ENCODE measurements at regions of chr11 and their contacts with region 1.

Region 1: DNA sequence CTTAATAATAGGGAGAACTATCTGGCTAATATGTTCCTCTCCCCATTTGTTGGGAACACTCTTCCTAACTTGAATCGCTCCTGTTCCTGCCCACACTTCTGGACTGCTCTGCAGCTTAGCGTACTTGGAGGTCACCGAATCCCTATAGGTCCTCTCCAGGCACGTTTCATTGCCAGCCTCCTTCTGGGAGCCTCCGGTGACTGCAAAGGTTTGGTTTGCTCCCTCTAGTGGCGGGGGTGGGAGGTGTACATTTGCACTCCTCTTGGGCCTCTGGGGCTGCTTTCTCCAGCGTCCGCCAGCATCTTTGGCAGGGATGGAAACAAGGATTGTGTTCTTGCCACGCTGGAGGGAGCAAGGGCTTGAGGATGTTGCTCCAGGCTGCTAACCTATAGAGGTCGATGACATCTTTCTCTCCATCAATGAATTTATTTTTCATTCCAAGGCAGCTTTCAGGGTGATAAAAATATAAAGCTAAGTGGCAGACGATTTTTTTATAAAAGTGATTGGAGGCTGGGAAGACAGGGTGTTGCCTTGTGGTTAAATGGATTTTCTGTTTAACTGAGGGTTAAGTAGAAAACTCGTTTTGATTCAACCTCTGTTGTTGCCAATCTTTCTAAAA is 48.7 kb downstream of the TSPAN18 start:
- DNase-seq: peak; percentile 60
- H3K4me3 ChIP-seq: no peak overlapping the region
- H3K27ac ChIP-seq: peak overlapping the region; percentile 58
- H3K4me1 ChIP-seq: peaks cover 21% of the 10 kb centered on the region
- H3K27me3 ChIP-seq: no peaks in the 10 kb centered on the region
- CTCF ChIP-seq: peak; percentile 75 to 86
- POLR2A ChIP-seq: no peak

Region 2: DNA sequence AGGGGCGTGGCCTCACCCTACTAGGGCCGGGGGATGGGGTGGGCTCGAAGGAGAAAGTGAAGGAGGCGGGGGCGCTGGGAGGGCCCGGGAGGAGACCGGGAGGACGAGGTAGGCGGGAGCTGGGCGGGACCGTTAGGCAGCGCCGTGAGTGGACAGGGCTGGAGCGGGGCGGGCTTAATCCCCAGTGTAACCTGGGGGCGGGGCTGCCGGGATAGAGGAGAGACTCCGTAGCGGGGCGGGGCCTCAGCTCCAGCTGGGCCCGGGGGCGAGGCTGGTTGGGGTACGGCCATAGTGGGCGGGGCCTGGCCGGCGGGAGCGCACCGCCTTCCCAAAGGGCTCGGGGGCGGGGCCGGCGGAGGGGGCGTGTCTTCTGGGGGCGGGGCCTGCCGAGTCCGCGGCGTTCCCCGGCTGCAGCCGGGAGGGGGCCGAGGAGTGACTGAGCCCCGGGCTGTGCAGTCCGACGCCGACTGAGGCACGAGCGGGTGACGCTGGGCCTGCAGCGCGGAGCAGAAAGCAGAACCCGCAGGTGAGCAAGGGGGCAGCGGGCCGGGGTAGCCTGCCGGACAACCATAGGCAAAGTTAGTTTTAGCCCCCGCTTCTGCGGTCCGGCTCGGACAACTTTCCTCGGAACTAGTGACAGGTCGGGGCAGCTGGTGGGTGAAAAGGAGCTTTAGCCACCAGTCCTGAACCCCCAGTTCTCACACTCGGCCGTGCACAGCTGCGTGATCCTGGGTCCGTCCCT is 210.1 kb before region 1 on chr11 and contains the start of gene CD82:
- CTCF ChIA-PET with region 1: no interaction called
- POLR2A ChIA-PET with region 1: no interaction called
- dilution Hi-C with region 1: no loop called
- intact Hi-C with region 1: loop called (anchors 1 kb)
- DNase-seq: peak; percentile 99
- H3K4me3 ChIP-seq: peak within 1 kb of the TSS; percentile 25 to 42 (median 41)
- H3K27ac ChIP-seq: peak within 1 kb of the TSS; percentile 94
- H3K4me1 ChIP-seq: peaks cover 40% of the 10 kb centered on the region
- H3K27me3 ChIP-seq: no peaks in the 10 kb centered on the region
- CTCF ChIP-seq: peak; percentile 5 to 30
- POLR2A ChIP-seq: no peak
- total RNA-seq, gene CD82: 24.9 and 25.2 TPM in 2 replicates

Region 3: DNA sequence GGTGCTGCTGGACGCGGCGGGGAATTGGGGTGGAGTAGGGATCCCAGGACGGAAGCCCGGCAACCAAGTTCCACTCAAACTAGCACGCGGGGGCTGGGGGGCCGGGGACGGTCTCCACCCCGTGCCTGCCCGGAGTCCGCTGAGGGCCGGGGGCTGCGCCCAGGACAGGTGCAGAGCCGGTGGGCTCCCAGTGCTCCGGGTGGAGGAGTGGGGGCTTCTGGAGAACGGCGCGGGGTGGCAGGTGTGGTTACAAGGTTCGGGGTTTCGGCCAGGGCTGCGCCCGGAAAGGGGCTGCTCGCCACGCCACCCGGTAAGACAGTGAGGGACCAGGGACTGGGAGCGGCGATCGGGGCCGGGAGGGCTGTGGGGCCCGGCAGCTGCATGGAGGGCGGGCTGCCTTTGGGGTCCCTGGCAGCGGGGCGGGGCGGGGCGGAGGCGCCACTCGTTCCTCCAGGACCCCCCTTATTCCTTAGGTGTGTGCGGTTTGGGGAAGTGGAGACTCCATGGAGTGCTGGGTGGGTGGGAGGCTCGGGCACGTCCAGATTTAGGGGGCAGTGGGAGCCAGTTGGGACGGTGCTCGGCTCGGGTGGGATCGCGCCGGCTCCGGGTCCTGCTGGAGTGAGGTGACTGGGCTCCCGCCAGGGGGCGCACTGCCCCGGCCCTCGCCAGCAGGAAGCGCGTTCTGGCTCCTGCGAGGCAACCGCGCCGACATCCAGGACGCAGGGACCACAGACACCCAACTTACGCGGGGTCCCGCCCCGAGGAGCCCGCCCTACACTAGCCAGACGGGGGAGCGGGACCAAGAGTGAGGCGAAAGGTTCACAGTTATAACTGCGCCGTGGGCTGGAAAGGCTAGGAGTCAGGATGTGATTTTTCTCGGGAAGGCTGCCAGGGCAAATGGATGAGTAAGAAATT is 47.8 kb before region 1 on chr11:
- CTCF ChIA-PET with region 1: interaction called, 24 read pairs
- POLR2A ChIA-PET with region 1: interaction called, 3 read pairs
- dilution Hi-C with region 1: no loop called
- intact Hi-C with region 1: loop called (anchors 1 kb)
- DNase-seq: peak; percentile 82
- H3K4me3 ChIP-seq: peak overlapping the region; percentile 51 to 73 (median 61)
- H3K27ac ChIP-seq: no peak overlapping the region
- H3K4me1 ChIP-seq: peaks cover 35% of the 10 kb centered on the region
- H3K27me3 ChIP-seq: no peaks in the 10 kb centered on the region
- CTCF ChIP-seq: peak; percentile 89 to 97
- POLR2A ChIP-seq: no peak

Region 4: GRCh38 chr11:44785856-44786606 is 10.6 kb after region 1 on chr11:
- CTCF ChIA-PET with region 1: interaction called, 29 read pairs
- POLR2A ChIA-PET with region 1: no interaction called
- dilution Hi-C with region 1: no loop called
- intact Hi-C with region 1: no loop called
- DNase-seq: no peak
- H3K4me3 ChIP-seq: no peak overlapping the region
- H3K27ac ChIP-seq: no peak overlapping the region
- H3K4me1 ChIP-seq: peaks cover 15% of the 10 kb centered on the region
- H3K27me3 ChIP-seq: no peaks in the 10 kb centered on the region
- CTCF ChIP-seq: peak; percentile 6 to 44
- POLR2A ChIP-seq: no peak

Region 5: DNA sequence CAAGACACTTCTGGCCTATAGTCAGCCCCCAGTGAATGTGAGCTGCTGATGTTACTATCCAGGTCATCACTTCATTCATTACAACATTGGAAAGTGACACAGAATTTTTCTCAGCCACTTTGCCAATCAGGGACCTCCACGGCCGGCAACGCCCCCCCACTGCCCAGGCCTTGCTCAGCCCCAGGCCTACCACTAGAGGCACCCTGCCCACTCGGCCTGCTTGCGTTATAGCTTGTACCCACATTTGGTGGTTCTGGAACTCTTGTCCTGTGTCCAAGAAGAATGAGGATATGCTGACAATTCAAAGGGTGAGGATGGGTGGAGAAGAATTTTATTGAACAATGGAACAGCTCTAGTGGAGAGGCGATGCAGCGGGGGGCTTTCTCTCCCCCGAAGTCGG is 47.5 kb after region 1 on chr11:
- CTCF ChIA-PET with region 1: interaction called, 6 read pairs
- POLR2A ChIA-PET with region 1: no interaction called
- dilution Hi-C with region 1: no loop called
- intact Hi-C with region 1: loop called (anchors 2 kb)
- DNase-seq: no peak
- H3K4me3 ChIP-seq: no peak overlapping the region
- H3K27ac ChIP-seq: no peak overlapping the region
- H3K4me1 ChIP-seq: peaks cover 26% of the 10 kb centered on the region
- H3K27me3 ChIP-seq: no peaks in the 10 kb centered on the region
- CTCF ChIP-seq: peak; percentile 17 to 33
- POLR2A ChIP-seq: no peak

Measured in endothelial cell of umbilical vein (primary cell).